ENCODE measurements at regions of chr5 and their contacts with region 1.

Region 1: GRCh38 chr5:108681079-108681921 is 66.4 kb upstream of the FER start:
- DNase-seq: peak; percentile 57
- H3K4me3 Mint-ChIP-seq: no peak overlapping the region
- H3K27ac Mint-ChIP-seq: no peak overlapping the region
- H3K4me1 Mint-ChIP-seq: peaks cover 21% of the 10 kb centered on the region
- H3K27me3 Mint-ChIP-seq: no peaks in the 10 kb centered on the region
- CTCF ChIP-seq: peak; percentile 66

Region 2: DNA sequence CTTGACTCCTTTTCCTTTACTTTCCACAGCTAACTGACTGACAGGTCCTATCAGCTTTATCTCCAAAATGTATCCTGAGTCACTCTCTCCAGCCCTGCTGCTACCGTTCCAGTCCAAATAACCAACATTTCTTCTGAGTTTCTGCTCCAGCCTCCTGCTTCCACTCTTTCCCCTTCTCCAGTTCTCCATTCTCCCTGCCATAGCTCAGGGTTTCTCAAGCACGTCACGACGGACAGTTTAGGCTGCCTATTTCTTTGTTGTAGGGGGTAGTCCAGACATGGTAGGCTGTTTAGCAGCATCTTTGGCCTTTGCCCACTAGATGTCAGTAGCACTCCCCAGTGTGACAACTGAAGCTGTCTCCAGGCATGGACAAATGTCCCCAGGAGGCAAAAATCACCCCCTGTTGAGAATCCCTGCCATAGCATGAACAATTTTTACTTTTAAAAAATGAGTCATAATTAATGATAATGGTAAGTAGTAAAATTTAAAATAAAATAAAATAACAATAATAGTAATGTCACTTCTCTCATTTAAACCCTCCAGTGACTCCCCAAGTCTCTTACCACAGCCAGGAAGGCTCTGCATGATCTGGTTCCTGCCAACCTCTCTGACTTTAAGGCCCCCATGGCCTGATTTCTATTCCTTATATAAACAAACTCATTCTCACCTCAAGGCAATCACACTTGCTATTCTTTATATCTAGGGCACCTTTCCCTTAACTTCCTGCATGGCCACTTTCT is 39.0 kb before region 1 on chr5:
- CTCF ChIA-PET with region 1: no interaction called
- intact Hi-C with region 1: loop called (anchors 1 kb)
- DNase-seq: peak; percentile 82
- H3K4me3 Mint-ChIP-seq: peak overlapping the region; percentile 31
- H3K27ac Mint-ChIP-seq: peak overlapping the region; percentile 30
- H3K4me1 Mint-ChIP-seq: peaks cover 17% of the 10 kb centered on the region
- H3K27me3 Mint-ChIP-seq: no peaks in the 10 kb centered on the region
- CTCF ChIP-seq: peak; percentile 93

Region 3: DNA sequence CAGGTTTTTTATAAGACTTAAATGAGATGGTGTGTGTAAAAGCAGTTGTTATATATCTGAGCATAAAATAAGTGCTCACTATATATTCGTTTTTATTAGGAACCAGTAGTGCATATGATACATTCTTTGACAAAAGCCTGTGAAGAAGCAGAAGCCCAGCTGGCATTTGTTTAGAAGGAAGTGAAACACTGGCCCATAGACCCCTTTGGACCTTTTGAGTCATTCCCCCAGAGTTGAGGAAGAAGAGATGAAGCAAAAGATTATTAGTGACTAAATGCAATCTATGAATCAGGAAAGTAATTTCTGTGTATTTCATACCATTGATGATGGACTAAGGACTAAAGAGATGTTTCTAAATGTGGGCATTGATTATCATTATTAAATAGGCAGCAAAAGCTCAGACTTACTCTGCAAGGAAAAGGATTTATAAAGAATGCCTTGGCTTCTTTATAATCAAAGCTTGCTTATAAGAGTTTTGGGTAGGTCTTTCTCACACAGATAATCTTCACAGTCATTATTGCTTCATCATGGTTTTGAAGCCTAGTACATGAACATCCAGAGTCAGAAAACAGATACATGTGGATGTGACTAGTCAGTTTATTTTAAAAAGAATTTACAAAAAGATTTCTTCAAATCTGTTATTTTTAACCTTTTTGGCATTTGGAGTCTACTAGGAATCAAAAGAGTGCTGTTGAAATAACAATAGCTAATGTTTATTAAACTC is 49.5 kb after region 1 on chr5:
- CTCF ChIA-PET with region 1: no interaction called
- intact Hi-C with region 1: no loop called
- DNase-seq: no peak
- H3K4me3 Mint-ChIP-seq: no peak overlapping the region
- H3K27ac Mint-ChIP-seq: no peak overlapping the region
- H3K4me1 Mint-ChIP-seq: peaks cover 39% of the 10 kb centered on the region
- H3K27me3 Mint-ChIP-seq: no peaks in the 10 kb centered on the region
- CTCF ChIP-seq: no peak

Region 4: GRCh38 chr5:108748401-108749127 is 67.3 kb after region 1 on chr5:
- CTCF ChIA-PET with region 1: no interaction called
- intact Hi-C with region 1: loop called (anchors 2 kb)
- DNase-seq: peak; percentile 99
- H3K4me3 Mint-ChIP-seq: peak overlapping the region; percentile 87
- H3K27ac Mint-ChIP-seq: peak overlapping the region; percentile 99
- H3K4me1 Mint-ChIP-seq: peaks cover 22% of the 10 kb centered on the region
- H3K27me3 Mint-ChIP-seq: no peaks in the 10 kb centered on the region
- CTCF ChIP-seq: no peak

Region 5: DNA sequence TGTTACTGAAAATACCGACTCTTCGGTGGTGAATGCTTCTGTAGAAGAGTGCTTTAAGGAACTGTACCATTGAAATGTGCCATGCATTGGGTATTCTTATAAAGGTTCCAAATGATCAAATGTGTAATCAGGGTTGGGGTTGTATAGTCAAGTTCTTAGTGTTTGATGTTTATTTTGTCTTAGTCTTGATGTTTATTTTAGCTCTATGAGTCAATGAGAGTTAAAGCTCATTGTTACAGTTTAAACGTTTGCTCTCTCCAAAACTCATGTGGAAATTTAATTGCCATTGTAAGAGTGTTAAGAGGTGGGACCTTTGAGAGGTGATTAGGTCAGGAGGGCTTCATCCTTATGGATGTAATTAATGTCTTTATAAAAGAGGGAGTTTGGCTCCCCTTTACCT is 219.4 kb after region 1 on chr5:
- CTCF ChIA-PET with region 1: no interaction called
- intact Hi-C with region 1: loop called (anchors 5 kb)
- DNase-seq: no peak
- H3K4me3 Mint-ChIP-seq: no peak overlapping the region
- H3K27ac Mint-ChIP-seq: peak overlapping the region; percentile 7
- H3K4me1 Mint-ChIP-seq: peaks cover 24% of the 10 kb centered on the region
- H3K27me3 Mint-ChIP-seq: no peaks in the 10 kb centered on the region
- CTCF ChIP-seq: no peak